ENCODE measurements at regions of chrX and their contacts with region 1.

Region 1: GRCh38 chrX:12825801-12826200 is 34.6 kb downstream of the PRPS2 start:
- DNase-seq: no peak
- H3K4me3 ChIP-seq: no peak overlapping the region
- H3K27ac ChIP-seq: no peak overlapping the region
- H3K27me3 ChIP-seq: no peaks in the 10 kb centered on the region
- CTCF ChIP-seq: no peak

Region 2: GRCh38 chrX:12741439-12741838 is 84.4 kb before region 1 on chrX:
- CTCF ChIA-PET with region 1: no interaction called
- POLR2A ChIA-PET with region 1: no interaction called
- DNase-seq: no peak
- H3K4me3 ChIP-seq: no peak overlapping the region
- H3K27ac ChIP-seq: no peak overlapping the region
- H3K27me3 ChIP-seq: no peaks in the 10 kb centered on the region
- CTCF ChIP-seq: no peak

Region 3: GRCh38 chrX:12804655-12805054 is 21.1 kb before region 1 on chrX:
- CTCF ChIA-PET with region 1: no interaction called
- POLR2A ChIA-PET with region 1: no interaction called
- DNase-seq: no peak
- H3K4me3 ChIP-seq: no peak overlapping the region
- H3K27ac ChIP-seq: no peak overlapping the region
- H3K27me3 ChIP-seq: no peaks in the 10 kb centered on the region
- CTCF ChIP-seq: no peak

Region 4: DNA sequence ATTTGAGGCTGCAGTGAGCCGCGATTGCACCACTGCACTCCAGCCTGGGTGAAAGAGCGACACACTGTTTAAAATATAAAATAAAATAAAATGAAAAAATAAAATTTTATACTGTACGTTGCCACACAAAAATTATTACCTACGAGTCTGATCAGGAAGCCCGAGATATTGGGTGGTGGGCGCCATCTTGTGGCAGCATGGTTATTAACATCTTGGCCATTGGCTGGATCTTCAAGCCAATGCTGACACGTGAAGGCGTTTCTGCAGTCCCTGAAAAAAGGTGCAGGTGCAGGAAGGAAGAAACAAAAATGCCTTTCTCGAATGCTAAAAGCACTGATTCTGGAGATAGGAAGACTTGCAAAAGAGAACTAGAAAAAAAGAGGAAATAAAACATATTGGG is 75.7 kb after region 1 on chrX:
- CTCF ChIA-PET with region 1: interaction called, 10 read pairs
- POLR2A ChIA-PET with region 1: no interaction called
- DNase-seq: peak; percentile 7
- H3K4me3 ChIP-seq: no peak overlapping the region
- H3K27ac ChIP-seq: no peak overlapping the region
- H3K27me3 ChIP-seq: no peaks in the 10 kb centered on the region
- CTCF ChIP-seq: peak; percentile 59

Measured in AG04450 (cell line).